ENCODE measurements at regions of chr18 and their contacts with region 1.

Region 1: DNA sequence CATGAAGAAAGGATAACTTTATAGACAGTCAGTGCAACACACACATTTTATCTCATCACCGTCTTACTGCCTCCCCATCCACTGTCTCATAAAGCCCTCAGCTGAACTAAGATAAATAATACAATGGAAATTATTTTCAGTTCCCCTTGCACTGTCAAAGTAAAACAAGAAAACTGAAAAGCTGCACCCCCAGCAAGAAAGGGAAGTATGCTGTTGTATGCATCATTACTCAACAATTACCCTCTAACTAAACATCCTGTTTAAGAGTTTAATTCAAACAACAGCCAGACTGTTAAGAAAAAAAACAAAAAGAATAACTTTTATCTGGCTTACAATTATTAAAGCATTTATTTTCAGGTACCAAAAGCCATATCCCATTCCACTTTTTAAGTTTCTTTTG is 25.0 kb downstream of the MPPE1 start:
- DNase-seq: peak in 1 of 35 experiments; percentile 12
- ATAC-seq: no peak
- H3K4me3 ChIP-seq: no peak overlapping the region
- H3K4me3 Mint-ChIP-seq: no peak overlapping the region
- H3K27ac ChIP-seq: no peak overlapping the region
- H3K27ac Mint-ChIP-seq: no peak overlapping the region
- H3K4me1 ChIP-seq: no peaks in the 10 kb centered on the region
- H3K4me1 Mint-ChIP-seq: peaks cover 0 to 6% (median 0%) of the 10 kb centered on the region in 3 donors
- H3K27me3 ChIP-seq: no peaks in the 10 kb centered on the region
- H3K27me3 Mint-ChIP-seq: no peaks in the 10 kb centered on the region

Region 2: DNA sequence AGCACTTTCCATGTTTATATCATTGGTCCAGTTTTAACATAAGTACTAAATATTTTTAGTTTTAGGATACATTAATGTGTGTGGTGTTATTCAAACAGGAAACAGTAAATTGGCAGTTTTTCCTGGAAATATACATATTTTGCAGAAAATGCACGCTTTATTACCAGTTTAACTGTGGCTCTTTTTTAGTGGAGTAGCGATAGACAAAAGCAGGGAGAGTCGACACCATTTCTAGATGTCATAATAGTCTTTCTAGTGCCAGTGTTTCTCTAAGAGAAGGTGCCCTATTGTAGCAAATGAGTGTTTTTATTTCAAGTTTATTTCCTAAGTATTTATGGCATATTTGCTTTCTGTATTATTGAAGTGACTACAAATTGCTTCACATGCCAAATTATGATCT is 282.8 kb before region 1 on chr18:
- CTCF ChIA-PET with region 1: no interaction called
- POLR2A ChIA-PET with region 1: no interaction called
- DNase-seq: no peak
- ATAC-seq: no peak
- H3K4me3 ChIP-seq: no peak overlapping the region
- H3K4me3 Mint-ChIP-seq: no peak overlapping the region
- H3K27ac ChIP-seq: no peak overlapping the region
- H3K27ac Mint-ChIP-seq: no peak overlapping the region
- H3K4me1 ChIP-seq: no peaks in the 10 kb centered on the region
- H3K4me1 Mint-ChIP-seq: no peaks in the 10 kb centered on the region
- H3K27me3 ChIP-seq: no peaks in the 10 kb centered on the region
- H3K27me3 Mint-ChIP-seq: peaks cover 10 to 27% of the 10 kb centered on the region in 2 donors

Region 3: DNA sequence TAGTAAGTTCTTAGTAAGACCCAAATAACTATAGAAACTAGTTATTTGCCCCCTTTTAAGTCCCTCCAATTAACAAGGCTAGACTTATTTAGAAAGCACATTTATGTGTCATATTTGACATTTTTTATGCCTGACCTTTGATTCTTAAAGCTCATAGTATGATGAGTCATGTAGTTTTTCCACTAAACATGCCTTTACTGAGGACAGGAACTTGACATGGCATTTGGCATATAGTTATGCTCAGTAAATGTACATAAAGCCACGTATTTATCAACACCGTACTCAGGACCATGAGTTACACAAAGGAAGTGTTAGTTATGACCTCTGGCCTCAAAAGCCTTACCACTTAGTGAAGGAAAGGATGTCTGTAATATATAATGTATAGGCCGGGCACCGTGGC is 115.2 kb before region 1 on chr18:
- CTCF ChIA-PET with region 1: no interaction called
- POLR2A ChIA-PET with region 1: no interaction called
- DNase-seq: no peak
- ATAC-seq: no peak
- H3K4me3 ChIP-seq: no peak overlapping the region
- H3K4me3 Mint-ChIP-seq: no peak overlapping the region
- H3K27ac ChIP-seq: no peak overlapping the region
- H3K27ac Mint-ChIP-seq: no peak overlapping the region
- H3K4me1 ChIP-seq: no peaks in the 10 kb centered on the region
- H3K4me1 Mint-ChIP-seq: no peaks in the 10 kb centered on the region
- H3K27me3 ChIP-seq: peaks cover 5 to 6% of the 10 kb centered on the region in 2 experiments
- H3K27me3 Mint-ChIP-seq: peaks cover 2 to 15% of the 10 kb centered on the region in 2 donors

Region 4: GRCh38 chr18:11818486-11819203 is 64.5 kb before region 1 on chr18:
- CTCF ChIA-PET with region 1: no interaction called
- POLR2A ChIA-PET with region 1: interaction called in 1 of 2 experiments, 10 read pairs
- DNase-seq: peak in 9 of 35 experiments; percentile 2 to 44 (median 10)
- ATAC-seq: no peak
- H3K4me3 ChIP-seq: no peak overlapping the region
- H3K4me3 Mint-ChIP-seq: peak overlapping the region in 1 of 3 donors; percentile 34
- H3K27ac ChIP-seq: no peak overlapping the region
- H3K27ac Mint-ChIP-seq: no peak overlapping the region
- H3K4me1 ChIP-seq: no peaks in the 10 kb centered on the region
- H3K4me1 Mint-ChIP-seq: no peaks in the 10 kb centered on the region
- H3K27me3 ChIP-seq: no peaks in the 10 kb centered on the region
- H3K27me3 Mint-ChIP-seq: peaks cover 1 to 3% of the 10 kb centered on the region in 2 donors

Region 5: DNA sequence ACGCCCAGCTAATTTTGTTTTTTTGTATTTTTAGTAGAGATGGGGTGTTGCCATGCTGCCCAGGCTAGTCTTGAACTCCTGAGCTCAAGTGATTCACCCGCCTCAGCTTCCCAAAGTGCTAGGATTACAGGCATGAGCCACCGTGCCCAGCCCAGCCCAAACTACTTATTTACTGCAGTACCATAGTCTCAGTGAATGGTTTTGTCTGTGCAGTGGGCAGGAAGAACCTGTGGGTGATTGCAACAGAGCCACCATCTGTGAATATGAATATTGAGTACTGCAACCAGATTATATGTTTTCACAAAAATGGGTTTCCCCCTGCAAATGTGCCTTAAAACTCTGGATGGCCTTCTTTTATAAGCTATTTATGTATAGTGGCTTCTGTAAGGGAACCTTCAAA is 15.9 kb after region 1 on chr18:
- CTCF ChIA-PET with region 1: interaction called in 1 of 2 experiments, 5 read pairs
- POLR2A ChIA-PET with region 1: interaction called, 6 to 10 read pairs
- DNase-seq: no peak
- ATAC-seq: no peak
- H3K4me3 ChIP-seq: no peak overlapping the region
- H3K4me3 Mint-ChIP-seq: no peak overlapping the region
- H3K27ac ChIP-seq: no peak overlapping the region
- H3K27ac Mint-ChIP-seq: no peak overlapping the region
- H3K4me1 ChIP-seq: no peaks in the 10 kb centered on the region
- H3K4me1 Mint-ChIP-seq: peaks cover 3 to 5% (median 4%) of the 10 kb centered on the region in 3 donors
- H3K27me3 ChIP-seq: no peaks in the 10 kb centered on the region
- H3K27me3 Mint-ChIP-seq: no peaks in the 10 kb centered on the region

Region 6: GRCh38 chr18:12038639-12039417 is 155.7 kb after region 1 on chr18:
- CTCF ChIA-PET with region 1: no interaction called
- POLR2A ChIA-PET with region 1: no interaction called
- DNase-seq: peak; percentile 30 to 82 (median 57)
- ATAC-seq: peak; percentile 91 to 94 (median 93)
- H3K4me3 ChIP-seq: peak overlapping the region; percentile 44 to 76
- H3K4me3 Mint-ChIP-seq: peak overlapping the region; percentile 37 to 71 (median 57)
- H3K27ac ChIP-seq: no peak overlapping the region
- H3K27ac Mint-ChIP-seq: no peak overlapping the region
- H3K4me1 ChIP-seq: peaks cover 0 to 11% of the 10 kb centered on the region in 2 experiments
- H3K4me1 Mint-ChIP-seq: peaks cover 2 to 6% (median 4%) of the 10 kb centered on the region in 3 donors
- H3K27me3 ChIP-seq: peaks cover 3 to 30% of the 10 kb centered on the region in 2 experiments
- H3K27me3 Mint-ChIP-seq: peaks cover 15 to 18% of the 10 kb centered on the region in 2 donors